Upper lobe of right lung (tissue), 1 donor: ENCODE measurements at regions of chr12 and their contacts with region 1.

Region 1: DNA sequence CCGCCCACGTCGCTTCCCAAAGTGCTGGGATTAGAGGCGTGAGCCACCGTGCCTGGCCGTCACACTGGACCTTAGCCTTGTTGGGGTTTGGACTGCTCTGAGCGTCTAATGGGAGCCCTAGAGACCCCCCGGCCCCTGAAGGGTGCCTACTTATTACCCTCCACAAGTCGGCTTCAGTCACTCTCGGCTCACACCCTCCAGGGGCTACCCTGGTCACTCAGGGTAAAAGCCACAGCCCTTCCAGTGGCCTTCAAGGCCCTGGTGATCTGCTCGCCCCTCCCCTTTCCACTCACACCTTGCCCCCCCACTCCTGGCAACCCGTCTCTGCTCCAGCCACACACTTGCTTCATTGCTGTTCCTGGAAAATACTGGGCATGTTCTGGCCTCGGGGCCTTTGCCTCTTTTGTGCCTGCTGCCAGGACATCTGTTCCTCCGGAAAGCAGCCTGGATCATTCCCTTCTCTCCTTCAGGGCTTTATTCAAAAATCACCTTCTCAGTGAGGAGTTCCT is 3.6 kb upstream of the MORN3 start:
- DNase-seq: no peak
- ATAC-seq: peak; percentile 37
- H3K4me3 ChIP-seq: peak overlapping the region; percentile 54
- H3K27ac ChIP-seq: peak overlapping the region; percentile 56
- H3K4me1 ChIP-seq: peaks cover 10% of the 10 kb centered on the region
- H3K27me3 ChIP-seq: no peaks in the 10 kb centered on the region
- CTCF ChIP-seq: no peak

Region 2: GRCh38 chr12:121499929-121500793 is 172.9 kb before region 1 on chr12:
- intact Hi-C with region 1: loop called (anchors 10 kb)
- DNase-seq: peak; percentile 89
- ATAC-seq: peak; percentile 96
- H3K4me3 ChIP-seq: no peak overlapping the region
- H3K27ac ChIP-seq: no peak overlapping the region
- H3K4me1 ChIP-seq: peaks cover 6% of the 10 kb centered on the region
- H3K27me3 ChIP-seq: no peaks in the 10 kb centered on the region
- CTCF ChIP-seq: peak; percentile 99